Dorsolateral prefrontal cortex (tissue), 120 donors: ENCODE measurements at regions of chr1 and their contacts with region 1.

Region 1: DNA sequence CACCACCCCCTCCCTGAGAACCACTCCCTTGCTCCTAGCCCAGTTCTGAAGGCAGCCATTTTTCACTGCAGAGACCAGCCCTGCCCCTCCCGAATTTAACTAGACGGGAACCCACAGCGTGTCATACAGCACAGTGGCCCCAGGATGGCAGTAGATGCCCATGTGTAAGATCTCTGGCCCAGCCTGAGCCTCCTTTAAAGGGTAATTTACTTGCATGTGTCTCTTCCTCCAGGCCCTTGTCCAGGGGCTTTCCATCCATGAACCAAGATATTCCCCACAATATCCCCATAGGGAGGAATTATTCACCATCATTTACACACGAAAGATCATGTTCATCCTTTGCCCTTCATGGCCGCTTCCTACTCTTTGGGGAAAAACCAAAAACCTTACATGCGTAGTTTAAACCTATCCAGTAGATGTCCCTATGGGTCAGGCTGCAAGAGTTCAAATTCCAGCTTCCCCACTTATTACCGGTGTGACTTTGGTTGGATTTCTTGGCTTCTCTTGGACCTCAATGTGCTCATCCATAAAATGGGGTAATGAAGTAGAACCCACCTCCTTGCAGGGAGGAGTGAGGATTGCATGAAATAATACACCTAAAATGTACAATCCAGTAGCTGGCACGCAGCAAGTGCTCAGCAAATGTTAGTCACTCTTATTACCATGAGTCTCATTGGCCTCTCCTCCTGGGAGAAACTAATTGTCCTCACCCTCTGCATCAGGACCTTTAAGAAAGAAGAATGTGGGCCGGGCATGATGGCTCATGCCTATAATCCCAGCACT is 4.0 kb upstream of the LACTBL1 start:
- DNase-seq: peak in 9 of 10 donors; percentile 26 to 84 (median 65)
- H3K4me3 ChIP-seq: no peak overlapping the region
- H3K27ac ChIP-seq: no peak overlapping the region
- H3K27me3 ChIP-seq: peaks cover 0 to 42% (median 9%) of the 10 kb centered on the region in 45 donors
- CTCF ChIP-seq: peak; percentile 15 to 77 (median 62)

Region 2: DNA sequence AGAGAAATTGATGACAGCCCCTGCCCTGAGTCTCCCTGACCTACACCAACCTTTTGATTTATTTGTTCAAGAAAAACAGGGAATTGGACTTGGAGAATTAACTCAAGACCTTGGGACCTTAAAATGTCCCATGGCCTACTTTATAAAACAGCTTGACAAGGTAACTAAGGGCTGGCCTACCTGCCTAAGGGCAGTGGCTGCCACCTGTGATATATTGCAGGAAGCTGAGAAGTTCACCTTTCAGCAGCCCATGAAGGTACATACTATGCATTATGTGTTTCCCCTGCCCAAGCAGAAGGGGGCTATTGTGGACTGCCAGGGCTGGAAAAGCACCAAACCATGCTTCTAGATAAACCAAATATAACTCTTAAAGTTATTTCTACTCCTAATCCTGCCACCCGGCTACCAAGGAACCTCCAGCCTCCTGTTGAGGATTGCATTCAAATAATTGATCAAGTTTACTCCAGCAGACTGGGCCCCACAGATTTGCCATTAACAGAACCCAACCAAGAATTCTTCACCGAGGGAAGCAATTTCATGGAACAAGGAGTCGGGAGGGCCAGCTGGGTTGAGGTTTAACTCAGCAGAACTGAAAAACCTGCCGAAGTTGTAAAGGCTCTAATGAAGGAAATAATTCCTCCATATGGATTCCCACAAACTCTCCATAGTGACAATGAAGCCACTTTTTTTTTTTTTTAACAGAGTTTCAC is 32.2 kb before region 1 on chr1:
- intact Hi-C with region 1: no loop called
- DNase-seq: no peak
- H3K4me3 ChIP-seq: no peak overlapping the region
- H3K27ac ChIP-seq: no peak overlapping the region
- H3K27me3 ChIP-seq: peaks cover 0 to 11% (median 0%) of the 10 kb centered on the region in 45 donors
- CTCF ChIP-seq: no peak

Region 3: DNA sequence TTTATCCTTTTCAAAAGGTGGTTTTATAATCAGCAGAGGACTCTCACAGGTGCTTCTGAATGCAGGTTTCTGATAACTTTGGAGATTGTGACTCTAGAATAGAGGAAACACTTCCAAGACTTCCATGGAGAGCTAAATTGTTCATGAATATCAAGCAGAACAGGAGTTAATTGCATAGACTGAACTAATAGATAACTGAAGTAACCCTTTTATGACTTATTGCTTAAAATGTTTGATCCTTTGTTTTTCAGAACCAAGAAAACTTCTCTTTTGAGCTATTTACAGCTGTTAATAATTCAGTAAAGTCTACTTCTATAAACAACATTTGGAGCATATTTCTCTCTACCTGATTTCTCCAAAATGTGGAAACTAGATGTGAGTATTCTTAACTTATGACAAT is 19.1 kb after region 1 on chr1:
- intact Hi-C with region 1: no loop called
- DNase-seq: no peak
- H3K4me3 ChIP-seq: no peak overlapping the region
- H3K27ac ChIP-seq: no peak overlapping the region
- H3K27me3 ChIP-seq: peaks cover 0 to 3% (median 0%) of the 10 kb centered on the region in 45 donors
- CTCF ChIP-seq: no peak

Region 4: GRCh38 chr1:23050201-23050600 is 73.5 kb after region 1 on chr1:
- intact Hi-C with region 1: no loop called
- DNase-seq: no peak
- H3K4me3 ChIP-seq: no peak overlapping the region
- H3K27ac ChIP-seq: no peak overlapping the region
- H3K27me3 ChIP-seq: no peaks in the 10 kb centered on the region
- CTCF ChIP-seq: no peak

Region 5: DNA sequence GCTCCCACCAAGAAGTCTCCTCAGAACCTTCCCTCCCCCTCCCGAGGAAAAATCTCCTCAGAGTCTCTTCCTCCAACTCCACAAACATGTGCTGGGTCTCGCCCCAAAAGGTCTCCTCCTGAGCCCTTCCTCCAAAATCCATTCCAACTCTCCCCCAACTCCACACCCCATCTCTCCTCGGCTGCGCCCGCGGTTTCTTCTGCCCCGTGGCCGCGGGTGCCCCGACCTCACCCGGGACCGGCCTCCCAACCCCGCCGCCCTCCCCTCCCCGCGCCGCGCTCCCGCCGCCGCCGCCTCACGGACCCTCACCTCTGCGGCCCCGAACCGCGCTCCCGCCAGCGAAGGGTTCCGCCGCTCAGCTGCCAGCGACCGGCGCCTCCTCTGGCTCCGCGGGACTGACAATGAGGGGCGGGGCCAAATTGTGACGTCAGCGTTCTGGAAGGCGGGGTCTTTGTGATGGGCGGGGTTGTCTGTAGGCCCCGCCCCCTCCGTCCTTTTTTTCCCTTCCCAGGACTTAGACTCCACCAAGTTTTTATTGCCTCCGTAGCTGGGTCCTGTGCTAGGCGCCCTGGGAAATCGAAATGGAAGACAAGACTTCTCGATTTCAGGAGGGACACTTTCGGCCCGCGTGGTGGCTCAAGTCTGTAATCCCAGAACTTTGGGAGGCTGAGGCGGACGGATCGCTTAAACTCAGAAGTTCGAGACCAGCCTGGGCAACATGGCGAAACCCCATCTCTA is 192.0 kb after region 1 on chr1 and contains the start of gene LUZP1:
- intact Hi-C with region 1: no loop called
- DNase-seq: peak; percentile 86 to 97 (median 94)
- H3K4me3 ChIP-seq: peak within 1 kb of the TSS; percentile 62 to 92 (median 79)
- H3K27ac ChIP-seq: peak within 1 kb of the TSS in 58 of 59 donors; percentile 3 to 93 (median 82)
- H3K27me3 ChIP-seq: no peaks in the 10 kb centered on the region
- CTCF ChIP-seq: peak in 8 of 56 donors; percentile 7 to 33 (median 16)
- total RNA-seq, gene LUZP1: 23.0 to 108 (median 71.6) TPM

Region 6: DNA sequence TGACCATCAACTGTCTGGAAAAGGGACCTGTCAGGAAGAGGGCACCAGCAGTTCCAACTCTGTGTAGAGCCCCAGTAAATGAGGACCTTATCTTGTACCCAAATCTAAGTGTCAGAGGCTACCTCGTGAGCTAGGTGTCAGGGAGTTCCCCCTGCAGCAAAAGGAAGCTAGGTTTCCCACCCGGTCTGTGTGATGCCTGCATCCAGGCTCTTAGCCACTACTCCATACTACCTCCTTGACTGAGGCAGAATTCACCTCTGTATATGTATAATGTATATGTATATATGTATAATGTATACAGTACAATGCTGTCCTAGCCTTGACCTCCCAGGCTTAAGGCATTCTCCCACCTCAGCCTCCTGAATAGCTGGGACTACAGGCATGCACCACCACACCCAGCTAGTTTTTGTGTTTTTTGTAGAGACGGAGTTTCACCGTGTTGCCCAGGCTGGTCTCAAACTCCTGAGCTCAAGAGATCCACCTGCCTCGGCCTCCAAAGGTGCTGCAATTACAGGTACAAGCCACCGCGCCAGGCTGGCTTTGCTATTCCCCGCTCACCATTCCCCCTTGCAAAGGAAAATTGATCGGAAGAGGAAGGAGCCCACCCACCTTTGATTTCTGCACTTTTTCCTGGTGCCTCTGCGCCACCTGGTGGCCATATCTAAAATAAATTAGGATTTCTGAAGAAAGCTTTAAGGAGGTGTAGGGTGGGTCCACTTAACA is 207.7 kb after region 1 on chr1:
- intact Hi-C with region 1: loop called (anchors 2 to 10 kb)
- DNase-seq: peak in 1 of 10 donors; percentile 22
- H3K4me3 ChIP-seq: peak overlapping the region; percentile 4 to 69 (median 49)
- H3K27ac ChIP-seq: no peak overlapping the region
- H3K27me3 ChIP-seq: no peaks in the 10 kb centered on the region
- CTCF ChIP-seq: peak; percentile 77 to 98 (median 90)